Caco-2 (cell line): ENCODE measurements at regions of chrX and their contacts with region 1.

Region 1: DNA sequence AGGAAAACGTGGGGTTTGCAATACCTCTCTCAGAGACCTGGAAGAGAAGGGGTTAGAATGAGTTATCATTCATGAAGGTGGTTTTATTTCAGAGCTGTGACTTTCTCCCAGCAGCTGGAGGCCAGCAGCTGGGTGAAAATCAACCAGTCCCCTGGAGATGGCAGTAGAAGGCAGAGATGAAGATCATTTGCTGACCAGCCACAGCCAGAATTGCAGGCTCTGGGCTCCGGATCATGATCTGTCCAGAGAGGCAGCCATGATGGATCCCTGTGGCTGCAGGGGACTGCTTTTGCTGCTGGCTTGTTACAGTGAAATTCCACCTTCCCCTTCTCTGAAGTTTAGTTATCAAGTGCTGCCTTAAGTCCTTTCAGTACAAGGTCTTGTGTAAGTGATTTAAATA is 46.9 kb upstream of the TAB3 start:
- DNase-seq: peak; percentile 62 to 65
- H3K4me3 ChIP-seq: no peak overlapping the region
- H3K4me3 Mint-ChIP-seq: no peak overlapping the region
- H3K27ac Mint-ChIP-seq: peak overlapping the region; percentile 19
- H3K4me1 ChIP-seq: peaks cover 55% of the 10 kb centered on the region
- H3K4me1 Mint-ChIP-seq: peaks cover 25% of the 10 kb centered on the region
- H3K27me3 ChIP-seq: no peaks in the 10 kb centered on the region
- H3K27me3 Mint-ChIP-seq: no peaks in the 10 kb centered on the region
- CTCF ChIP-seq: peak in 1 of 2 experiments; percentile 33

Region 2: DNA sequence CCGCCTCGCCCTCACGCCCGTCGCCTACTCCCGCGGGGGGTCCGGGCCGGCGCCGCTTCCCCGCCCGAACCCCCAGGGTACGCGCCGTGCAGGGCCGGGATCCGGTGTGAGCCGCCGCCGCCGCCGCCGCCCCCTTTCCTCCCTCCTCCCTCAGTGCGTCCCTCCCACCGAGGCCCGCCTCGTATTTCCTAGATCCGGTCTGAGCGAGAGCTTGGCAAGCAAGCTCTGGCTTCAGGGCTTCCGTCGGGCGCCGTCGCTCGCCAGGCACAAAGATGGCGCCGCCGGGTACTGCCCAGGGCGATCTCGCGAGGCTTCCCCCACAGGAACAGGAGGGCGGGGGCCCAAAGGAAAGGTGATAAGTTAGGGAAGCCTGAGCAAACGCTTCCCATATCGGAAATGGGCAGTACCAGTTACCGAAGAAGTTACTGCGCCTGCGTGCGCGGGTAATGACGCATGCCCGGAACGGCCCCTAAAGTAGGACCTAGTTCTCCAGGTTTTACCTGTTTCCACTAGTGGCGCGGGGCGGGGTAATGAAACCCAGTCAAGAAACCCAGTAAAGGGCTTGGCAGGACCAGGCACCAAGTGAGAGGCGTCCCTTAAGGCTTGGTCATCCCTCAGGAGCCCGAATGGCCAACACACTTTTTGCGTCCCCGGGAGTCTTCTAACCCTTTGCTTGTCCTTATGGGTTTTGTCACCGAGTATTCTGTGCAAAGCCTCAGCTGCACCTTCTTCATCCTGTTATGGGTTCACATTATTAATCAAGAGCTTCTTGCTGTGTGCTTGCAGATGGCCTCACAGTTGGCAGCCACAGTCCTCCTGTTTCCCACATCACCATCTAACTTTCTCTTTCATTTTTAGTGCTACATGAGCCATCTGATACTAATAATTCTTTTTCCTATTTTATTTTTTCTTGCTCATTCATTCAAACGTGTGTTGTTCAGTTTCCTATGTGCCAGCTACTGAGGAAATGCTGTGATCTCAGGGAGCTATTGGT is 46.5 kb before region 1 on chrX and contains the start of gene TAB3:
- CTCF ChIA-PET with region 1: no interaction called
- POLR2A ChIA-PET with region 1: interaction called, 3 read pairs
- intact Hi-C with region 1: loop called (anchors 2 kb)
- DNase-seq: peak; percentile 94 to 96
- H3K4me3 ChIP-seq: peak within 1 kb of the TSS; percentile 82
- H3K4me3 Mint-ChIP-seq: peak within 1 kb of the TSS; percentile 95
- H3K27ac Mint-ChIP-seq: peak within 1 kb of the TSS; percentile 80
- H3K4me1 ChIP-seq: peaks cover 15% of the 10 kb centered on the region
- H3K4me1 Mint-ChIP-seq: peaks cover 16% of the 10 kb centered on the region
- H3K27me3 ChIP-seq: no peaks in the 10 kb centered on the region
- H3K27me3 Mint-ChIP-seq: no peaks in the 10 kb centered on the region
- CTCF ChIP-seq: no peak
- total RNA-seq, gene TAB3: 14.8 TPM in 2 replicates

Region 3: GRCh38 chrX:30971774-30972603 is 36.0 kb after region 1 on chrX:
- CTCF ChIA-PET with region 1: interaction called, 8 read pairs
- POLR2A ChIA-PET with region 1: no interaction called
- intact Hi-C with region 1: loop called (anchors 1 kb)
- DNase-seq: peak; percentile 21 to 38
- H3K4me3 ChIP-seq: no peak overlapping the region
- H3K4me3 Mint-ChIP-seq: peak overlapping the region; percentile 71
- H3K27ac Mint-ChIP-seq: no peak overlapping the region
- H3K4me1 ChIP-seq: no peaks in the 10 kb centered on the region
- H3K4me1 Mint-ChIP-seq: peaks cover 1% of the 10 kb centered on the region
- H3K27me3 ChIP-seq: no peaks in the 10 kb centered on the region
- H3K27me3 Mint-ChIP-seq: no peaks in the 10 kb centered on the region
- CTCF ChIP-seq: peak; percentile 41 to 63

Region 4: GRCh38 chrX:31228415-31228832 is 292.4 kb after region 1 on chrX:
- CTCF ChIA-PET with region 1: no interaction called
- POLR2A ChIA-PET with region 1: no interaction called
- intact Hi-C with region 1: no loop called
- DNase-seq: no peak
- H3K4me3 ChIP-seq: no peak overlapping the region
- H3K4me3 Mint-ChIP-seq: no peak overlapping the region
- H3K27ac Mint-ChIP-seq: no peak overlapping the region
- H3K4me1 ChIP-seq: peaks cover 10% of the 10 kb centered on the region; the same call in 1 of the 2 replicates
- H3K4me1 Mint-ChIP-seq: peaks cover 16% of the 10 kb centered on the region
- H3K27me3 ChIP-seq: no peaks in the 10 kb centered on the region
- H3K27me3 Mint-ChIP-seq: no peaks in the 10 kb centered on the region
- CTCF ChIP-seq: no peak

Region 5: DNA sequence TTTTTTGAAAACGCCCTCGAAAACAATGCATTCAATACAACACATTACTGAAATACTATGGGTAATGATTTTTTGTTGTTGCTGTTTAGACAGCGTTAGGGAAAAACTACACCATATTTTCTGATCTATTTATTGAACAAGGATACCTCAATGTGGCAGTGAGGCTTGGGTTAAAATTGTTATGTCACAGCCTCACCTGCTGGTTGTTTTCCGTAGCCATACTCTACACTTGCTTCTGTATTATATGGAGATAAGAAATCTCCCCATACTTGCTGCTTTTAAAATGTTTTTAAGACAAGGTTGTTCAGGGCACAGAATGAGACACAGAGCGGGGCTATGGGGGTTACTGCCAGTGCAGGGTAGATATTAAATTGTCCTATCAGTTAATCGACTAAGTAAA is 357.4 kb after region 1 on chrX:
- CTCF ChIA-PET with region 1: no interaction called
- POLR2A ChIA-PET with region 1: no interaction called
- intact Hi-C with region 1: loop called (anchors 1 kb)
- DNase-seq: no peak
- H3K4me3 ChIP-seq: no peak overlapping the region
- H3K4me3 Mint-ChIP-seq: no peak overlapping the region
- H3K27ac Mint-ChIP-seq: no peak overlapping the region
- H3K4me1 ChIP-seq: no peaks in the 10 kb centered on the region
- H3K4me1 Mint-ChIP-seq: no peaks in the 10 kb centered on the region
- H3K27me3 ChIP-seq: no peaks in the 10 kb centered on the region
- H3K27me3 Mint-ChIP-seq: no peaks in the 10 kb centered on the region
- CTCF ChIP-seq: peak in 1 of 2 experiments; percentile 30